ENCODE measurements at regions of chr14 and their contacts with region 1.

Region 1: GRCh38 chr14:63543000-63543825 is at the start of gene PPP2R5E:
- DNase-seq: peak; percentile 87
- ATAC-seq: peak; percentile 96
- H3K4me3 Mint-ChIP-seq: peak within 1 kb of the TSS; percentile 97
- H3K27ac Mint-ChIP-seq: peak within 1 kb of the TSS; percentile 92
- H3K4me1 Mint-ChIP-seq: peaks cover 34% of the 10 kb centered on the region
- H3K27me3 Mint-ChIP-seq: no peaks in the 10 kb centered on the region
- CTCF ChIP-seq: no peak
- total RNA-seq, gene PPP2R5E: 40.0 and 44.8 TPM in 2 replicates

Region 2: DNA sequence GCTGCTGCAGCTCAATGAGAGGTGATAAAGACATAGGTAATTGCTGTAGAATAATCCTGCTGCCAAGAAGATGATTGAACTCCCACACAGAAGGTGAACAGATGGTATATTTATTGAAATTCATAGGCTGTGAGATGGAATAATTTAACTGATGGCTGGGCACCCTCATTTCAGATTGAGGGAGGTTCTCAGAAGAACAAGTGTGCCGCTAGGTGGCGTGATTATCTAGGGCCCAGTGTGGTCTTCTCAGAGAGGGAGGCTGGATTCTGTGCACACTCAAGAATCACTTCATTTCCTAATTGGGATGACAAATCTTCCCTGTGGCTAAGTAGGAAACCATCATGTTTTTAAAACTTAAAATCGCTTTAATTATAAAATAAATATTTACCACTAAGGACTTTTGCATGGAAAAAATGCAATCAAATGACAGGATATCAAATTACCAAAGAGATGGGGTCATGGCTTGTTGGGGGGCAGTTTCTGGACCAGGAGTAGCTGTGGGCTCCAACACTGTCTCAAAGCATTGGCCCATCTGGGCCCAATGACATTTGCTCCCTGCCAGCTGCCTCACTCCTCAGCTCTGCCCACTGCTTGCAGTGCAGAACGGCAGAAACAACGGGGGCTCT is 1648.6 kb before region 1 on chr14:
- CTCF ChIA-PET with region 1: no interaction called
- POLR2A ChIA-PET with region 1: no interaction called
- intact Hi-C with region 1: loop called (anchors 5 kb)
- DNase-seq: peak; percentile 30
- ATAC-seq: no peak
- H3K4me3 Mint-ChIP-seq: no peak overlapping the region
- H3K27ac Mint-ChIP-seq: no peak overlapping the region
- H3K4me1 Mint-ChIP-seq: peaks cover 30% of the 10 kb centered on the region
- H3K27me3 Mint-ChIP-seq: no peaks in the 10 kb centered on the region
- CTCF ChIP-seq: peak; percentile 57

Region 3: GRCh38 chr14:63454863-63455622 is 88.2 kb before region 1 on chr14:
- CTCF ChIA-PET with region 1: no interaction called
- POLR2A ChIA-PET with region 1: no interaction called
- intact Hi-C with region 1: no loop called
- DNase-seq: no peak
- ATAC-seq: no peak
- H3K4me3 Mint-ChIP-seq: no peak overlapping the region
- H3K27ac Mint-ChIP-seq: no peak overlapping the region
- H3K4me1 Mint-ChIP-seq: peaks cover 8% of the 10 kb centered on the region
- H3K27me3 Mint-ChIP-seq: no peaks in the 10 kb centered on the region
- CTCF ChIP-seq: no peak

Region 4: GRCh38 chr14:63470962-63471793 is 72.0 kb before region 1 on chr14:
- CTCF ChIA-PET with region 1: no interaction called
- POLR2A ChIA-PET with region 1: interaction called, 6 read pairs
- intact Hi-C with region 1: loop called (anchors 2 kb)
- DNase-seq: no peak
- ATAC-seq: peak; percentile 71
- H3K4me3 Mint-ChIP-seq: no peak overlapping the region
- H3K27ac Mint-ChIP-seq: peak overlapping the region; percentile 30
- H3K4me1 Mint-ChIP-seq: peaks cover 40% of the 10 kb centered on the region
- H3K27me3 Mint-ChIP-seq: no peaks in the 10 kb centered on the region
- CTCF ChIP-seq: no peak

Region 5: GRCh38 chr14:63524537-63525155 is 18.6 kb before region 1 on chr14:
- CTCF ChIA-PET with region 1: no interaction called
- POLR2A ChIA-PET with region 1: interaction called, 10 read pairs
- intact Hi-C with region 1: no loop called
- DNase-seq: no peak
- ATAC-seq: peak; percentile 94
- H3K4me3 Mint-ChIP-seq: peak overlapping the region; percentile 16
- H3K27ac Mint-ChIP-seq: peak overlapping the region; percentile 73
- H3K4me1 Mint-ChIP-seq: peaks cover 20% of the 10 kb centered on the region
- H3K27me3 Mint-ChIP-seq: no peaks in the 10 kb centered on the region
- CTCF ChIP-seq: no peak

Region 6: DNA sequence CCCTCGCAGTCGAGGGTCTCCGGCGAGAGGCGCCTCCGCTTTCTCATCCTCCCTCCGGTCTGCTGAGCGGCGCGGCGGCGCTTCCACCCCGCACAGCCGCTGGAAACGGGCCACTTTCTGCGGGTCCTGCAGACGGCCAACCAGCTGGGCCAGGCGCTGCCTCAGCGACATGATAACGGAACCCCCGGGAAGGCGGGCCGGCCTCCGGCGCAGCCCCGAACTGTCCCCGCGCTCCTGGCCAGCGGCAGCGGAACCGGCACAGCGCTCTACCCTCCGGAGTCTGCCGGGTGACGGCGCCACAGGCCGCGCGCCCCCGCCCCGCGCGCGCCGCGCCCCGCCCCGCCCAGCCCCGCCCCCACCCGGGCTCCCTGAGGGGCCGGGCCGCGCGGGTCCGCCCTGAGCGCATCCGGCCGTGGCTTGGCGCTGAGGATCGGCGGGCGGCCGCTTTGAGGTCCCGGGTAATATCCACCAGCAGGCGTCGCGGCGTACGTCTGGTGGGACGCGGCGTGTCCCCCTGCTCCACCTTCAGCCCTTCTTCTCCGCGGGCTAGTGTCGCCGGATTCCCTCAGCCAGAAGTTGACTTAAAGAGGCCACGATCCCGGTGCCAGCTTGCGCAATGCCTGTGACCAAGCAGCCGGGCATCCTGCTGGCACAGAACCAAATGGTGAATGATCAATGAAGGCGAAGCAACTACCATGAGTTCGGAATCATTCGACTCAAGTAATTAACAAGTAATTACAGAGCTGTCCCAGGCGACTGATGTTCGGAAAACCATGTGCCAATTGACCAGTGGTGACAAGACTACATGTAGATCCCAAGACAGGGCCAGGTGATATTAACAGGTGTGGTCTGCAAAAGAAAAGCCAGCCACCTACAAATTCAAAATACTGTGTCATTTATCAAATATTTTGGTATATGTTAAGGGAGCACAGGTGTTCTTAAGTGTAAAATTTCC is 184.8 kb after region 1 on chr14 and contains the start of gene SGPP1:
- CTCF ChIA-PET with region 1: no interaction called
- POLR2A ChIA-PET with region 1: interaction called, 9 read pairs
- intact Hi-C with region 1: loop called (anchors 1 kb)
- DNase-seq: peak; percentile 82
- ATAC-seq: peak; percentile 91
- H3K4me3 Mint-ChIP-seq: peak within 1 kb of the TSS; percentile 99
- H3K27ac Mint-ChIP-seq: peak within 1 kb of the TSS; percentile 96
- H3K4me1 Mint-ChIP-seq: peaks cover 42% of the 10 kb centered on the region
- H3K27me3 Mint-ChIP-seq: no peaks in the 10 kb centered on the region
- CTCF ChIP-seq: no peak
- total RNA-seq, gene SGPP1: 20.9 and 21.2 TPM in 2 replicates

Region 7: DNA sequence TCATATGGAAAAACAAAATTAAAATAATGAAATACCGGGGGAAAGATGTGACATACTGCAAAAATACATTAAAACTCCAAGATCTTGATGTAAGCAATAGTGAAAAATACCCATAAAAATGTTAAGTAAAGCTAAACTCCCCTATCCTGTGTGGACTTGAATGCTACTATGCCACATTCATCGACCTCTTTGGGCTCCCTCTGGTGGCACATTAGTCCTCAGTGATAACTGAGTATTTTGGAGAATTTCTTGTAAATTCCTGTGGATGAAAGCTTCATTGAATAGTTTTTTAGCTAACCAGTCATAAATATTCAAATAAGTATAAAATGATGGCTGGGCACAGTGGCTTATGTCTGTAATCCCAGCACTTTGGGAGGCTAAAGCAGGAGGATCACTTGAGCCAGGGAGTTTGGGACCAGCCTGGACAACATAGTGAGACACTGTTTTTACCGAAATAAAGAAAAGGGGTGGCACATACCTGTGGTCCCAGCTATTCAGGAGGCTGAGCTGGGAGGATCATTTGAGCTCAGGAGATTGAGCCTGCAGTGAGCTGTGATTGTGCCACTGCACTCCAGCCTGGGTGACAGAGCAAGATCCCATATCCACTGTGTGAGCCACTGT is 227.1 kb after region 1 on chr14:
- CTCF ChIA-PET with region 1: interaction called, 5 read pairs
- POLR2A ChIA-PET with region 1: interaction called, 3 read pairs
- intact Hi-C with region 1: loop called (anchors 5 kb)
- DNase-seq: no peak
- ATAC-seq: peak; percentile 83
- H3K4me3 Mint-ChIP-seq: no peak overlapping the region
- H3K27ac Mint-ChIP-seq: no peak overlapping the region
- H3K4me1 Mint-ChIP-seq: peaks cover 13% of the 10 kb centered on the region
- H3K27me3 Mint-ChIP-seq: no peaks in the 10 kb centered on the region
- CTCF ChIP-seq: peak; percentile 42

Measured in activated B cell treated with CpG ODN at 0.5 μM for 24 hours (primary cell).